Endothelial cell of umbilical vein (primary cell): ENCODE measurements at regions of chr10 and their contacts with region 1.

Region 1: GRCh38 chr10:77165445-77166208 is 472.0 kb downstream of the KCNMA1 start:
- DNase-seq: peak; percentile 77
- H3K4me3 ChIP-seq: no peak overlapping the region
- H3K27ac ChIP-seq: peak overlapping the region; percentile 80
- H3K4me1 ChIP-seq: peaks cover 41% of the 10 kb centered on the region
- H3K27me3 ChIP-seq: no peaks in the 10 kb centered on the region
- CTCF ChIP-seq: peak; percentile 59 to 66
- POLR2A ChIP-seq: no peak

Region 2: GRCh38 chr10:77179015-77179695 is 13.5 kb after region 1 on chr10:
- CTCF ChIA-PET with region 1: interaction called, 32 read pairs
- POLR2A ChIA-PET with region 1: no interaction called
- dilution Hi-C with region 1: no loop called
- intact Hi-C with region 1: no loop called
- DNase-seq: peak; percentile 47
- H3K4me3 ChIP-seq: no peak overlapping the region
- H3K27ac ChIP-seq: no peak overlapping the region
- H3K4me1 ChIP-seq: peaks cover 12% of the 10 kb centered on the region
- H3K27me3 ChIP-seq: no peaks in the 10 kb centered on the region
- CTCF ChIP-seq: no peak
- POLR2A ChIP-seq: no peak

Region 3: DNA sequence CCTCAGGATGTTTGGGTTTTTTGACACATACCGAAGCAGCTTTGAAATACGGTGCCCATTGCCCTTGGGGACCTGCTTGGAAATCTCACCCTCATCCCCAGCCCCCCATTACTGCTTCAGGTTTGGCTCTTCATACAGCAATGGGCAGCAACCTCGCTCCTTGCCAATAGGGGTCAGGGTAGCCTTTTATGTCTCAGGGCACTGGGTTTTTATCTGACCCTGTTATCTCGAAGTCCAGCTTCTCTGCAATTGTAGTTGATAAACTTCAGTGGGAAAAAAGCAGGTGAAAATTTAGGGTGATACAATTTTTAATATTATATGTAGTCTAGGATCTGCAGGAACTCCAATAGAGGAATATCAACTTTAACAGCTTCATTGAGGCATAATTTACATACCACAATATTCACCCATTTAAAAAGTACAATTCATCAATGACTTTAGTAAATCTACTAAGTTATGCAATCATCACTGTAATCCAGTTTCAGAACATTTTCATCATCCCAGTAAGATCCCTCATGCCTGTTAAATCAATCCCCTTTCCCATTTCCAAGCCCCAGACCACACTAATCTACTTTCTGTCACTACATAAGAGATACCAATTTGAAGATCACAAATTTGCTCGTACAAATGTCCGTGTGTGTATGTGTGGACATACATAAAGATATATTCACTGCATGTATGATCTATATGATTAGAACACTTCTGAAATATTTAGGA is 85.8 kb after region 1 on chr10:
- CTCF ChIA-PET with region 1: interaction called, 26 read pairs
- POLR2A ChIA-PET with region 1: no interaction called
- dilution Hi-C with region 1: no loop called
- intact Hi-C with region 1: loop called (anchors 1 kb)
- DNase-seq: peak; percentile 55
- H3K4me3 ChIP-seq: no peak overlapping the region
- H3K27ac ChIP-seq: no peak overlapping the region
- H3K4me1 ChIP-seq: no peaks in the 10 kb centered on the region
- H3K27me3 ChIP-seq: peaks cover 0 to 2% of the 10 kb centered on the region in 2 experiments
- CTCF ChIP-seq: peak; percentile 67 to 72
- POLR2A ChIP-seq: no peak

Region 4: DNA sequence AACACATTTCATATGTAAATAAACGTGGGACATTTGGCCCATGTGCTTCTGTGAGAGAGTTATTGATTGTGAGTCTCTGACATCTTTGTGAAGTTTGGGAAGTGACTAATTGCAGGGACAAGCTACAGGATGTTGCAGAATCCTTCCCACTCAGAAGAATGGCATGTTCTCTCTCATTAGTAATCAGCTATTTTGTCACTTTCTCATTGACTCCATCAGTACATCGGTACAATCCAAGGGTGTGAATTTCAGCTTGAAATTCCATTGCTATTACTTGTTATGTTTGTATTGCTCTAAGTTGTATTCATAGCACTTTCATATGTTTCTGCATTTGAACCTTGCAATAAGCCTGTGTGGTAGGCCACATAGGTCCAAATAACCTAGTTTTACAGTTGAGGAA is 572.0 kb after region 1 on chr10:
- CTCF ChIA-PET with region 1: interaction called, 7 read pairs
- POLR2A ChIA-PET with region 1: no interaction called
- dilution Hi-C with region 1: no loop called
- intact Hi-C with region 1: loop called (anchors 1 kb)
- DNase-seq: peak; percentile 94
- H3K4me3 ChIP-seq: no peak overlapping the region
- H3K27ac ChIP-seq: peak overlapping the region; percentile 90
- H3K4me1 ChIP-seq: peaks cover 20% of the 10 kb centered on the region
- H3K27me3 ChIP-seq: no peaks in the 10 kb centered on the region
- CTCF ChIP-seq: no peak
- POLR2A ChIP-seq: peak; percentile 37